ENCODE measurements at regions of chr15 and their contacts with region 1.

Region 1: GRCh38 chr15:50377867-50378751 is 23.1 kb upstream of the GABPB1 start:
- DNase-seq: no peak
- H3K4me3 ChIP-seq: no peak overlapping the region
- H3K27ac ChIP-seq: peak overlapping the region; percentile 51 to 55
- H3K4me1 ChIP-seq: no peaks in the 10 kb centered on the region
- H3K27me3 ChIP-seq: no peaks in the 10 kb centered on the region
- CTCF ChIP-seq: no peak

Region 2: GRCh38 chr15:50315814-50316630 is 62.1 kb before region 1 on chr15:
- intact Hi-C with region 1: loop called (anchors 10 kb)
- DNase-seq: no peak
- H3K4me3 ChIP-seq: no peak overlapping the region
- H3K27ac ChIP-seq: no peak overlapping the region
- H3K4me1 ChIP-seq: no peaks in the 10 kb centered on the region
- H3K27me3 ChIP-seq: no peaks in the 10 kb centered on the region
- CTCF ChIP-seq: peak in 2 of 3 experiments; percentile 38 to 52

Measured in ascending aorta (tissue), 2 donors.